ENCODE measurements at regions of chr14 and their contacts with region 1.

Region 1: DNA sequence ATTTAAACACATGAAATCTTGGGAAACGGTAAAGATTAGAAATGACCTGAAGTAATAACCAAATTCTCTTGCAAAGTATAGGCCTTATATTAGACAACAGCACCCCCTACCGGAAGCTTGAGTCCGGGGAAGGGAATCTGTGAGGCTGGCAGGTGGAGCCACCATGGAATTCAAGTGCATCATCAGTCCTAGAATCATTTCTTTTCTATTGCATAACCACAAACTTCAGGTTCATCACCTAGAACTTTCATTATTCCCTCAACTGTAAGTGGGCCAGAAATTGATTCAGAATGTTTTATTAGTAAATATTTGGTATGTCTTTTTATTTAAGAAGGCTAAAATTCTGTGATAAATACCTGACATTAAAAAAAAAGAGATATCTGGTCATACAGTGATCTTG is 48.5 kb downstream of the AP5M1 start:
- DNase-seq: peak; percentile 36 to 39
- ATAC-seq: peak in 1 of 2 donors; percentile 60
- H3K4me3 ChIP-seq: no peak overlapping the region
- H3K27ac ChIP-seq: no peak overlapping the region
- H3K4me1 ChIP-seq: no peaks in the 10 kb centered on the region
- H3K27me3 ChIP-seq: no peaks in the 10 kb centered on the region
- CTCF ChIP-seq: peak; percentile 52 to 83 (median 66)
- POLR2A ChIP-seq: no peak

Region 2: DNA sequence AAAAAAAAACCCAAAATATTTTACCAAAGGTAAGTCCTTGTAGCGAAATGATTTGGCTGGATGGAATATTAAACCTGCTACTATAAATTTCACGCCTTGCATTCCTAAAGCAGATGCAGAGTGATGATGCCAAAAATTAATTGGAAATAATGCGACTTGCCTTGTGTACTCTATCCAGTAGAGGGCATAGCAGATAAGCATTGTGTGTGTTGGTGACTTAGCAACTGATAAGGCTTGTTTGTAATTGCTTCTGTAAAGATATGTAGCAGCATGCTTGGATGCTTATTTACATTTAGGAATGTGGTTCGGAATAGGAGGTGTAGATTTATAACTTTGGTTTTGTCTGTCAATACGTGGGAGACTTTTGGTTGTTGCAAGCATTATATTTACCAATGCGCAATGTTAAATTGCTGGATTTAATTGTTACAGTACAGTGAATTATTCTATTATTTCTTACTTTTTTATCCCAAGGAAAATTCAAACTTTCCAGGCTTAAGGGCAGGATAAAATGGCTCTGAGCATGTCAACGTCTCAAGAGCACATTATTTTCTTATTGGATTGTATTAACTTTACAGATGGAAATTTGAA is 657.3 kb before region 1 on chr14:
- in situ Hi-C with region 1: no loop called
- intact Hi-C with region 1: loop called (anchors 5 kb)
- DNase-seq: no peak
- ATAC-seq: no peak
- H3K4me3 ChIP-seq: no peak overlapping the region
- H3K27ac ChIP-seq: no peak overlapping the region
- H3K4me1 ChIP-seq: no peaks in the 10 kb centered on the region
- H3K27me3 ChIP-seq: no peaks in the 10 kb centered on the region
- CTCF ChIP-seq: peak in 3 of 5 experiments; percentile 25 to 45 (median 25)
- POLR2A ChIP-seq: no peak